ENCODE measurements at regions of chr4 and their contacts with region 1.

Region 1: DNA sequence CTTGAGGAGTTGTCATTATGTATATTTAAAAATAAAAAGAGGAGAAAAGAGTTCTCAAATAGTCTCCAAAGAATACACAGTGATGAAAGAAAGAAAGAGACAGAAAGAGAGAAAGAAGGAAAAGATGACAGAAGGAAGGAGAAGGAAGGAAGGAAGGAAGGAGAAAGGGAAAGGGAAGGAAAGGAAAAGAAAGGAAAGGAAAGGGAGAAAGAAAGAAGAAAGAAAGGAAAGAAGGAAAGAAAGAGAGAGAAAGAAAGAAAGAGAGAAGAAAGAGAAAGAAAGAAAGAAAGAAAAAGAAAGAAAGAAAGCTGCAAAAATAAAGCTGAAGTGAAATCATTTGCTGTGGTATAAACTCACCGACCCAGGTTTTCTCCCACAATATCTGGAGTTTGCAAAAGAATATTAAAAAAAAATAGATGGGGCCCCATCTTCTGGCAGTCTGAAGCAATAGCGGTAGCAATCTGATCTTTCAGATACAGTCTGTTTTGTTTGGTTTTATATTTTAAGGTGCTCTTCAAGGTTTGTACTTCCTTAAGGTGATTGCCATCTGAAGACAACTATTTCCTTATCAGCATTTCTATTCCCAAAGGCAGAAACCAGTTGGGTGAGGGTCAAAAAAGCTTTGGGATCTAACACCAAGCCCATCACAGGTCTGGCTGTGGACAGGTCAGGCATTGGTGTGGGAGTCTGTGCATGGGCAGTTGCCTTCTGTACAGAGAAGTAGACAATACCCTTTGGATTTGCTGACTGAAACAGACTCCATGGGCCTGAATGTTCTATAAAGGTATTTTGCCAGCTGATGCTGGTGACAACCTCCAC is 160.4 kb downstream of the CPEB2 start:
- DNase-seq: no peak
- H3K4me3 ChIP-seq: no peak overlapping the region
- H3K27ac ChIP-seq: peak overlapping the region in 1 of 59 donors; percentile 14
- H3K27me3 ChIP-seq: peaks cover 0 to 3% (median 0%) of the 10 kb centered on the region in 45 donors
- CTCF ChIP-seq: peak in 53 of 56 donors; percentile 26 to 71 (median 48)

Region 2: GRCh38 chr4:14749910-14750309 is 412.8 kb before region 1 on chr4:
- intact Hi-C with region 1: loop called in 1 of 2 experiments (anchors 10 kb)
- DNase-seq: peak in 5 of 10 donors; percentile 14 to 57 (median 46)
- H3K4me3 ChIP-seq: no peak overlapping the region
- H3K27ac ChIP-seq: no peak overlapping the region
- H3K27me3 ChIP-seq: no peaks in the 10 kb centered on the region
- CTCF ChIP-seq: peak in 48 of 56 donors; percentile 11 to 61 (median 36)

Region 3: GRCh38 chr4:14888790-14889572 is 273.7 kb before region 1 on chr4:
- intact Hi-C with region 1: loop called in 1 of 2 experiments (anchors 10 kb)
- DNase-seq: no peak
- H3K4me3 ChIP-seq: no peak overlapping the region
- H3K27ac ChIP-seq: no peak overlapping the region
- H3K27me3 ChIP-seq: no peaks in the 10 kb centered on the region
- CTCF ChIP-seq: no peak

Region 4: DNA sequence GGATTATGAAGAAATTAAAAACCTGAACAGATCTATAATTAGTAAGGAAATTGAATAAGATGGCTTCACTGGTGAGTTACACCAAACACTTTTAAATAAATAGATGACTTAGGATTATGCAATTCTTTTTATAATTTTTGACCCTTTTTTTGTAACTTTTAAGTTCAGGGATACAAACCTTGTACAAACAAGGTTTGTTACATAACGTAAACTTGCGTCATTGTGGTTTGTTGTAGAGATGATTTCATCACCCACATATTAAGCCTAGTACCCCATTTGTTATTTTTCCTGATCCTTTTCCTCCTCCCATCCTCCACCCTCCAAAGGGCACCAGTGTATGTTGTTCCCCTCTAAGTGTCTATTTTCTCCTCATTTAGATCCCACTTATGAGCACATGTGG is 84.7 kb before region 1 on chr4:
- intact Hi-C with region 1: no loop called
- DNase-seq: no peak
- H3K4me3 ChIP-seq: no peak overlapping the region
- H3K27ac ChIP-seq: no peak overlapping the region
- H3K27me3 ChIP-seq: no peaks in the 10 kb centered on the region
- CTCF ChIP-seq: no peak

Region 5: DNA sequence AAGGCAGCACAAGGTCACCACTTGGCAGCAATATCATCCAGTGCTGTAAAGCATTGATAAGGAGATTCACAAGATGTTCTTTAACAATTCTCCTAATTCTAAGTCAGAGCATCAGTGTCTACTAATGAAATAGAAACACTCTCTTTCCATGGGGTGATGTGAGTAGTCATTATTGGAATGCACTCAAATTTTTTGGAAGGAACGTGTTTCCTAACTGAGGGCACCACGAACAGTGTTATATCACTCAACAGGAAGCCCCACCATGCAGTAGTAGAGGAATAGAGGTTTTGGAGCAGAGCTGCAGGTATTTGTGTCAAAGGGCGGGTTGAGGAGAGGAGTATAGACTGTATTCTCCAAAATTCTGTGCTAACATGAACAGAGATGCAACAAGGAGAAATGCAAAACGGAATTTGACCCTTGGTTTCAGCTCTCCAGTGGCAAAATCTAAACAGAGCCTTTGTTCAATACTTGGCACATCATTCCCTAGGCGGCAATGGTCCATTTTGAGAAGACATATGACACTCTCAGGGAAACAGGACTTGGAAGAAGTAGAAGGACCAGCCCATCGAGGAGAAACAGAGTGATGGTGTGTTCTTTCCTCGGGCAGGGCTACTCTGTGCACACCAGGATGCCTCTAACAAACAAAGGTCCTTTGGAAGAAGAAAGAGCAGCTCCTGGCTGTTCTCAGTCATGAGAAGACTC is 61.5 kb before region 1 on chr4:
- intact Hi-C with region 1: no loop called
- DNase-seq: peak in 5 of 10 donors; percentile 4 to 58 (median 50)
- H3K4me3 ChIP-seq: peak overlapping the region in 32 of 59 donors; percentile 6 to 58 (median 26)
- H3K27ac ChIP-seq: peak overlapping the region in 58 of 59 donors; percentile 42 to 93 (median 85)
- H3K27me3 ChIP-seq: no peaks in the 10 kb centered on the region
- CTCF ChIP-seq: peak in 1 of 56 donors; percentile 10

Region 6: GRCh38 chr4:15466596-15466995 is 303.9 kb after region 1 on chr4:
- intact Hi-C with region 1: no loop called
- DNase-seq: no peak
- H3K4me3 ChIP-seq: no peak overlapping the region
- H3K27ac ChIP-seq: no peak overlapping the region
- H3K27me3 ChIP-seq: no peaks in the 10 kb centered on the region
- CTCF ChIP-seq: no peak

Region 7: DNA sequence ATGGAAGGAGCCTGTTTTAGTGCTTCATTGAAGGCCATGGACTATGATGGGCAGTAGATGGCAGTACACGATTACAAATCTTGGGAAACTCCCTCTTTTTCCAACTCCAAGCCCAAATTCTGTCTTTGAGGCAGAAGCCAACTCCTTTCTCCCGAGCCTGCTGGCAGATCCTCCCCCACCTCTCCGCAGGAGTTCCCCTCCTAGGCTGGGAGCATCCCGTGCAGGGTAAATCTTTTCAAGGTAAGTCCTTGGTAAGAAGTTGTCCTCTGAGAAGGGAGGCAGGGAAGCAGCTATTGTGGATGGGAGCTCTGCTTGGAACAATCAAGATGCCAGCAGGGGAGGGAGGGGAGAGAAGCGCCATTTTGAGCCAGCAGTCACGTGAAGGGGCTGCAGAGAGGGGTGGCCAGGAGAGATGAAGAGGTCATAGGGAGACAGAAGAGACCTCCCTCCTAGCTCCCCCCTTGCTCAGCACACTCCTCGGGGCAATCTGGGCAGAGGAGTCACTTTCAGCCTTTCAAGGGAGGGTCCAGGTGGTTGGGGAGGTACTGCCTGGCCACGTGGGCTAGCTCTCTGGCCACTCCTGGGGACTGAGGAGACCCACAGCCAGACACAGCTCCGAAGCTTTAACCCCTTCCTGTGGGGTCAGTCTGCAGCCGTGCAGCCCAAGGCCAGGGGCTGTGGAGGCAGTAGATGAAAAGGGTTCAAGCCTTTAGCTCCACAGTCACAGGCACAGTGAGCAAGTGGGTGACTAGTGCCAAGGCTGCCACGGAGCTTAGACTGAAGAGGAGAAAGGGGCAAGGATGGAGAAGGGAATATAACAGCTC is 316.6 kb after region 1 on chr4:
- intact Hi-C with region 1: no loop called
- DNase-seq: peak; percentile 28 to 70 (median 60)
- H3K4me3 ChIP-seq: peak overlapping the region; percentile 51 to 94 (median 67)
- H3K27ac ChIP-seq: peak overlapping the region; percentile 57 to 96 (median 89)
- H3K27me3 ChIP-seq: no peaks in the 10 kb centered on the region
- CTCF ChIP-seq: peak; percentile 24 to 90 (median 83)

Measured in dorsolateral prefrontal cortex (tissue), 120 donors.